K562 (cell line): ENCODE measurements at regions of chr19 and their contacts with region 1.

Region 1: GRCh38 chr19:18251587-18252369 is 22.5 kb downstream of the IQCN start:
- DNase-seq: peak; percentile 77 to 84 (median 79)
- ATAC-seq: peak; percentile 86
- H3K4me3 ChIP-seq: no peak overlapping the region
- H3K27ac ChIP-seq: no peak overlapping the region
- H3K4me1 ChIP-seq: peaks cover 5 to 24% of the 10 kb centered on the region in 2 experiments; a peak in 3 of 5 replicates
- H3K27me3 ChIP-seq: peaks cover 4 to 6% of the 10 kb centered on the region in 2 experiments; a peak in 2 of 5 replicates
- CTCF ChIP-seq: peak; percentile 89 to 95 (median 94)
- EP300 ChIP-seq: 0 out of 2 replicates have a peak, but pooled peaks have one; percentile 7
- POLR2A ChIP-seq: no peak
- RAD21 ChIP-seq: peak; percentile 95 to 99

Region 2: GRCh38 chr19:18007044-18007916 is 244.5 kb before region 1 on chr19:
- CTCF ChIA-PET with region 1: interaction called, 14 read pairs
- POLR2A ChIA-PET with region 1: no interaction called
- in situ Hi-C with region 1: no loop called
- intact Hi-C with region 1: no loop called
- DNase-seq: peak; percentile 79 to 91 (median 84)
- ATAC-seq: peak; percentile 98
- H3K4me3 ChIP-seq: peak overlapping the region; percentile 27
- H3K27ac ChIP-seq: peak overlapping the region; percentile 43
- H3K4me1 ChIP-seq: peaks cover 10 to 38% of the 10 kb centered on the region in 2 experiments; a peak in 4 of 5 replicates
- H3K27me3 ChIP-seq: no peaks in the 10 kb centered on the region
- CTCF ChIP-seq: peak; percentile 93 to 97 (median 96)
- EP300 ChIP-seq: no peak; the same call in 1 of the 2 replicates
- POLR2A ChIP-seq: no peak
- RAD21 ChIP-seq: peak; percentile 95

Region 3: DNA sequence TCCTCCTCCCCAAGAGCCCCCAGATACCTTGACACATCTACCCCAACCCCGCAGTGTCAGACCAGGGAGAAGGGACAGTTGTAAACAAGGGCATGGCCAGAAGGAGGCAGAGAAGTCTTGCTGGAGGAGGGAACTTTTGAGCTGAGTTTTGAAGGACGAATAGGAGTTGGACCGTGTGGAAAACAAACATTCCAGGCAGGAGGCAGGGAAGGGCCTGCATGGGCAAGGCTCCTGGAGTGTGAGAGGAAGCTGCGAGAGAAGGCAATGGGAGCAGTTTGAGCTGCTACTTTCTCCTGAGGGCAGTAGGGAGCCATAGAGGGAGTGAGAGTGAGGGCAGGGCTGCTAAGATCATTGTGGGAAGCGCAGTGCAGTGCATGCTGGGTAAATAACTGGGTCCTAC is 188.3 kb before region 1 on chr19:
- CTCF ChIA-PET with region 1: no interaction called
- POLR2A ChIA-PET with region 1: interaction called, 6 read pairs
- in situ Hi-C with region 1: no loop called
- intact Hi-C with region 1: loop called (anchors 5 kb)
- DNase-seq: peak; percentile 35 to 65 (median 40)
- ATAC-seq: 0 out of 3 replicates have a peak, but pooled peaks have one; percentile 20
- H3K4me3 ChIP-seq: no peak overlapping the region
- H3K27ac ChIP-seq: no peak overlapping the region
- H3K4me1 ChIP-seq: peaks cover 8 to 22% of the 10 kb centered on the region in 2 experiments; a peak in 4 of 5 replicates
- H3K27me3 ChIP-seq: no peaks in the 10 kb centered on the region
- CTCF ChIP-seq: peak; percentile 64 to 73 (median 71)
- EP300 ChIP-seq: no peak
- POLR2A ChIP-seq: no peak
- RAD21 ChIP-seq: peak; percentile 58 to 69

Region 4: DNA sequence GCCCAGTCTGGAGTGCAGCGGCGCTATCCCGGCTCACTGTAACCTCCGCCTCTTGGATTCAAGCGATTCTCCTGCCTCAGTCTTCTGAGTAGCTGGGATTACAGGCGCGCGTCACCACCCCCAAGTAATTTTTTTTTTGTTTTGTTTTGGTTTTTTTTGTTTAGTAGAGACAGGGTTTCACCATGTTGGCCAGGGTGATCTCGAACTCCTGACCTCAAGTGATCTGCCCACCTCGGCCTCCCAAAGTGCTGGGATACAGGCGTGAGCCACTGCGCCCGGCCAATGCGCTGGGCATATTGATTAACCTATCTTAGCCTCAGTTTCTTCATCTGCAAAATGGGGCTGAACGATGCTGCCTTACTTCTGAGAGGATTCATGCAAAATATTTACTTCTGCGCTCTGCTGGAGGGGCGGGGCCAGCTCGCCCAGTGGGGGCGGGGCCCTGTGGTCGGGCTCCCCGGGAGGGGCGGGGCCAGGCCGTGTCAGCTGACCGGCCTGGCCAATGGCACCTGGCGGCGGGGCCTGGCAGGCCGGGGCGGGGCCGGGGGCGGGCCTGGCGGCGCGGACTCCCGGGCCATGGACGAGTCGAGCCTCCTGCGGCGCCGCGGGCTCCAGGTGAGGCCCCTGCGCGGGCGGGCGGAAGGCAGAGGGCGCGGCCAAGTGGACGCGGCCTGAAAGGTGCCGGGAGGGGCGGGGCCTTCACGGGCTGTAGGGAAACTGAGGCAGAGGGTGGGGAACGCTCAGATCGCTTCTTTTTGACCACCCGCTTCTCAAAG is 154.4 kb before region 1 on chr19 and contains the start of gene MAST3:
- CTCF ChIA-PET with region 1: no interaction called
- POLR2A ChIA-PET with region 1: no interaction called
- in situ Hi-C with region 1: loop called (anchors 5 kb)
- intact Hi-C with region 1: no loop called
- DNase-seq: peak; percentile 94 to 100 (median 99)
- ATAC-seq: peak; percentile 97
- H3K4me3 ChIP-seq: peak within 1 kb of the TSS; percentile 47
- H3K27ac ChIP-seq: peak within 1 kb of the TSS; percentile 55
- H3K4me1 ChIP-seq: peaks cover 20 to 42% of the 10 kb centered on the region in 2 experiments; a peak in 4 of 5 replicates
- H3K27me3 ChIP-seq: no peaks in the 10 kb centered on the region
- CTCF ChIP-seq: 0 out of 6 replicates have a peak, but pooled peaks of 2 of the 3 experiments have one; percentile 13 to 16
- EP300 ChIP-seq: no peak
- POLR2A ChIP-seq: no peak
- RAD21 ChIP-seq: no peak
- polyA plus RNA-seq, gene MAST3: 0.94 to 2.5 TPM

Region 5: DNA sequence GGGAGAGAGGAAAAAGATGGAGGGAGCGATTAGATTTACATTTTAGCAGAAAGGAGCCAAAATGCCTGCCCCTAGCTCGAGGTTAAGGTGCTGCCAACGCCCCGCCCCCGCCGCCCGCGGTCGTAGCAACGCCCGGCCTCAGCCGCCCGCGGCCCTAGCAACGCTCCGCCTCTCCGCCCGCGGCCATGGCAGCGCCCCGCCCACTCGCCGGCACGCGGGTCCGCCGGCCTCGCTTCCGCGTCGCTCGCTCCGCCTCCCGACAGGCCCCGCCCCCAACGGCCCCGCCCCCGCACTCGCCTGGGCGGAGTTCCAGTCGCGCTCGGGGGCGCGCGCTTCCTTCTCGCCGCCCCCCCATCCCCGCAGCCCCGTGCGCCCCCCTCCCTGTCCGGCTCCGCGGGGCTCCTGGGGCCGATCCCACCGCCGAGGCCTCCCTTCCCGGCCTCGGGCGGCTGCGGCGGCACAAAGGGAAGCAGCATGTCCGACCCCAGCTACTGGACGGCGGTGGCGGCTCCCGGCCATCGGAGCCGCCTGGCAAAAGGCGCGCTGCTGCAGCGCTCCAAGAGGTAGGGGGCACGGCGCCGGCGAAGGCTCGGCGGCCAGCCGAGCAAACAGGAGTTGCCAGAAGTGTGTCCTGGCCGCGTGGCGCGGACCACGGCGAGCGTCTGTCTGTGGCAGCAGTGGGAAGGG is 133.9 kb before region 1 on chr19:
- CTCF ChIA-PET with region 1: interaction called, 10 read pairs
- POLR2A ChIA-PET with region 1: no interaction called
- in situ Hi-C with region 1: no loop called
- intact Hi-C with region 1: loop called (anchors 1 kb)
- DNase-seq: peak; percentile 93 to 99 (median 98)
- ATAC-seq: peak; percentile 94
- H3K4me3 ChIP-seq: peak overlapping the region; percentile 82
- H3K27ac ChIP-seq: peak overlapping the region; percentile 76
- H3K4me1 ChIP-seq: peaks cover 13 to 25% of the 10 kb centered on the region in 2 experiments; a peak in 4 of 5 replicates
- H3K27me3 ChIP-seq: no peaks in the 10 kb centered on the region
- CTCF ChIP-seq: 0 out of 6 replicates have a peak, but pooled peaks of 1 of the 3 experiments have one; percentile 1
- EP300 ChIP-seq: no peak
- POLR2A ChIP-seq: peak; percentile 35; the same call in 1 of the 2 replicates
- RAD21 ChIP-seq: no peak

Region 6: GRCh38 chr19:18203863-18204393 is 47.9 kb before region 1 on chr19 and contains the start of gene RAB3A:
- CTCF ChIA-PET with region 1: interaction called, 55 read pairs
- POLR2A ChIA-PET with region 1: interaction called, 3 read pairs
- in situ Hi-C with region 1: loop called (anchors 5 kb)
- intact Hi-C with region 1: loop called (anchors 1 kb)
- DNase-seq: peak; percentile 96 to 100 (median 98)
- ATAC-seq: peak; percentile 96
- H3K4me3 ChIP-seq: peak within 1 kb of the TSS; percentile 68
- H3K27ac ChIP-seq: peak within 1 kb of the TSS; percentile 86
- H3K4me1 ChIP-seq: peaks cover 14 to 45% of the 10 kb centered on the region in 2 experiments; a peak in 4 of 5 replicates
- H3K27me3 ChIP-seq: no peaks in the 10 kb centered on the region
- CTCF ChIP-seq: 0 out of 6 replicates have a peak, but pooled peaks of 1 of the 3 experiments have one; percentile 2
- EP300 ChIP-seq: no peak
- POLR2A ChIP-seq: no peak
- RAD21 ChIP-seq: no peak
- polyA plus RNA-seq, gene RAB3A: 0.17 TPM in 1 of 2 experiments, not detected in the other